ENCODE measurements at regions of chr4 and their contacts with region 1.

Region 1: DNA sequence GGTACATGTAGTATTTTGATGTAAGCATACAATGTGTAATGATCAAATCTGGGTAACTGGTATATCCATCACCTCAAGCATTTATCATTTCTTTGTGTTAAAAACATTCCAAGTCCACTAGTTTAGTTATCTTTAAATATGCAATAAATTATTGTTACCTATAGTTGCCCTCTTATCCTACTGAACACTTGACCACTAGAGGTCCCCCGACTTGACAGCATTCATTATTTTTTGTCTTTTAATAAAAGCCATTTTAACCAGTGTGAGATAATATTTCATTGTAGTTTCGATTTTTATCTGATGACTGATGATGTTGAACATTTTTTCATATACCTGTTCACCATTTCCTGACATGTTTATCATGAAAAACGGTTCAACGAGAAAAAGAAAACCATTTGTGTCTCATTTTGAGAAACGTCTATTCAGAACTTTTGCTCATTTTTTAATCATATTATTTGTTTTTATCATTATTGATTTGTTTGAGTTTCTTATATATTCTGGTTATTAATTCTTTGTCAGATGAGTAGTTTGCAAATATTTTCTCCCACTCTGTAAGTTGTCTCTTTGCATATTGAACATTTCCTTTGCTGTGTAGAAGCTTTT is 199.0 kb upstream of the CXXC4 start:
- DNase-seq: peak; percentile 13
- H3K4me3 ChIP-seq: no peak overlapping the region
- H3K27ac ChIP-seq: no peak overlapping the region
- H3K4me1 ChIP-seq: no peaks in the 10 kb centered on the region
- CTCF ChIP-seq: peak; percentile 80

Region 2: DNA sequence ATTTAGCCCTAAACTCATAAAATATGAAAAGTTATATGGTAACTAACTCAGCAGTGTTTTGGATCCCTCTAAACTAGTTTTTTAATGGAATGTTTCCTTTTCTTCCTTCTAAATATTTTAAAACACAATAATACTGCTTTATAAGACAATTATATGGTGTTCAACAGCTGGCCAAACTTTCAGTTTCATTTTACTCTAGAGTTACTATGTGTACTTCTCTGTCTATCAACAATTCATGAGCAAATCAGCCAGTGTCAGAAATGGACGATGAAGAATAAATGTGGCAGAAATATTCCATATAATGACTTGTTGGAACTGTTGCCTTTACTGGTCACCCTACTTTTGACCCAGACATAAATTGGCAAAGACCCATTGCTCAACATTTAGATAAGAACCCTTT is 134.2 kb before region 1 on chr4:
- CTCF ChIA-PET with region 1: no interaction called
- POLR2A ChIA-PET with region 1: no interaction called
- intact Hi-C with region 1: no loop called
- DNase-seq: no peak
- H3K4me3 ChIP-seq: no peak overlapping the region
- H3K27ac ChIP-seq: no peak overlapping the region
- H3K4me1 ChIP-seq: no peaks in the 10 kb centered on the region
- CTCF ChIP-seq: no peak

Region 3: DNA sequence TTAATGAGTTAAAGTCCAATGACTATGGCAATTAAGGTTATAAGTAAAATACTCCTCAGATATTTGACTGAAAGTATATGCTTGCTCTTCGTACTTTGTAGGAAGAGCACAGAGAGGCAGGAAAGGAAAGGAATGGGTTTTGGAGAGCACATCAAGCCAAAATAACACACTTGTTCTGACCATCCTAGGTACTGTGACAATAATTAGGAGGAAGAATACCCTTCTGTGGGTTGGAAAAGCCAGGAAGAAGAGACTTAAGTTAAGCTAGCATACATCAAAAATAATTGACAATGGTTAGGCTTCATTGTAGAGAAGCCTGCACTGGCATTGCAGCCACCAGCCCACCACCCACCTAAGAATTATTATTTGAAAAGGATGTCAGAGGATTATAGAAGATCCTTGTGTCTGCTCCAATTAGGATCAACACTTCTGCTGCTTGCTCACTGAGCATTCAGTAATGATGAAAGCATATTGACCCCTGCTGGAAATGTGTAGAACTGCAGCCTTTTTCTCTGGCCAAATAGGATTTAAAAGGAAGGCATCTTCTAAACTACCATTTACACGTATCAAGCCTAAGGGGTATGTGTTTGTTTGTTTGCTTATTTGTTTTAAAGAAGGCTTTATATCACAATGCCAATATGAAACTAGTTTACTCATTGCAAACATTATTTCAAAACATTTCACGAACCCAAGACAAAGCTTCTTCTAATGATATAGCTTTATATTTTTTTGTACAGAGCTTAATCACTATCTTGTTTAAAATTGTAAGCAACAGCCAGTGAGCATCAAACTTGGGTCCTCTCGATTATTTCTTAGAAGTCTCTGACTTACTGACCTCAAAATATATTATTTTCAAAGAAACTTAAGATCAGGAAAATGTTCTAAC is 166.8 kb after region 1 on chr4:
- CTCF ChIA-PET with region 1: no interaction called
- POLR2A ChIA-PET with region 1: no interaction called
- intact Hi-C with region 1: loop called (anchors 5 kb)
- DNase-seq: peak; percentile 70
- H3K4me3 ChIP-seq: no peak overlapping the region
- H3K27ac ChIP-seq: no peak overlapping the region
- H3K4me1 ChIP-seq: no peaks in the 10 kb centered on the region
- CTCF ChIP-seq: peak; percentile 93